ENCODE measurements at regions of chr19 and their contacts with region 1.

Region 1: DNA sequence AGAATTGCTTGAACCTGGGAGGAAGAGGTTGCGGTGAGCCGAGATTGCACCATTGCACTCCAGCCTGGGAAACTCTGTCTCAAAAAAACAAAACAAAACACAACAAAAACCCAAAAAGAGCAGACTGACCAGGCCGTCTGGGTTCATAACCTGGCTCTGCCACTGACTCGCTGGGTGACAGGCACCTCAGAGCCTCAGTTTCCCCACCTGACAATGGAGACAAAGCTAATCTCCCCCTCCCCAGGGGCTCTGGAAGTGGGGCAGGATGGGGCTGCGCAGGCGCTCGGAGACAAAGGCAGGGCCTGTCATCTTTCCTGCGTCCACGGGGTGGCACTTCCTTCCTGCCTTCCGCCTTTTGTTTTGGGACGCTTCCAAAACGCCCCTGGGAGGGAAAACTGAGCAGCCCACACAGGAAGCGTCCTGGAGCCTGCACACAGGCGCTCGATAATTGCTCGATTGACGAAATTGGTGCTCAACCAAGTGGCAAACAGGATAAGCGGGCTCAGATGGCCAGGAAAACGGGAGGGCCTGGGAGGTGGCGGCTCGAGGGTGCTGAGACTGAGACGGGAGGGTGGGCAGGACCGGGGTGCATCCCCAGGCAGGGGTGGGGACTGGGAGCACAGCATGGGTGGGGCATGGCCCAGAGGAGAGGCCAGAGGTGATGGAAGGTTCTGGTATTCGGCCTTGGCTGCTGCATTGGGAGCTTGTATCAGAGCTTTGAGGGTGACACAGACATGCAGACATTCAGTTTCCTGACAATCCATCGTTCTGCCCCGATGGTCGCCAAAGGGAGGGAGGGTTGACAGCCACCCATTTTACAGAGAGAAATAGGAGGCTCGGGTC is 17.8 kb downstream of the SPC24 start:
- DNase-seq: no peak
- ATAC-seq: peak; percentile 61
- H3K4me3 ChIP-seq: peak overlapping the region; percentile 29; the same call in 1 of the 2 replicates
- H3K27ac ChIP-seq: no peak overlapping the region
- H3K4me1 ChIP-seq: peaks cover 9% of the 10 kb centered on the region
- H3K27me3 ChIP-seq: no peaks in the 10 kb centered on the region
- CTCF ChIP-seq: peak; percentile 63 to 72 (median 70)
- EP300 ChIP-seq: no peak
- POLR2A ChIP-seq: no peak
- RAD21 ChIP-seq: peak; percentile 80

Region 2: DNA sequence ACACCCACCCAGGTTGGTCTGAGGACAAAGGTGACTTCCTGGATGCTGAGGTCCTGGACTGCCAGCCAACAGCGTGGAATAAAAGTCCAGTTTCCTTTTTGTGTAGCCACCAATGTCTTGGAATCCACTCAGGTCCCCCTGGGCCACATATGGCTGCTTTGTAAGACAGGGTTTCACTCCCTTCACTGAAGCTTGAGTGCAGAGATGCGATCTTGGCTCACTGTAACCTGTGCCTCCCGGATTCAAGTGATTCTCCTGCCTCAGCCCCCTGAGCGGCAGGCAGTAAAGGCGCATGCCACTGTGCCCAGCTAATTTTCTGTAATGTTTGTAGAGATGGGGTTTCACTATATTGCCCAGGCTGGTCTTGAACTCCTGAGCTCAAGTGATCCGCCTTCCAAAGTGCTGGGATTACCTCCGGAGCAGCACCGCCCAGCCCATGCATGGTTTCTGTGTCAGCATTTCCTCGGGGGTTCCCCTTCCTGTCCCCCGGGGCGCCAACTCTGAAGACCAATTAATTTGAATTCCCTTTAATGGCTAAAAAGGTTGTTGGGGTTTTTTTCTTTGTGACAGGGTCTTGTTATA is 42.0 kb after region 1 on chr19:
- CTCF ChIA-PET with region 1: no interaction called
- POLR2A ChIA-PET with region 1: no interaction called
- RAD21 ChIA-PET with region 1: no interaction called
- SMC1A ChIA-PET with region 1: no interaction called
- in situ Hi-C with region 1: no loop called
- intact Hi-C with region 1: no loop called
- DNase-seq: peak; percentile 59
- ATAC-seq: peak; percentile 94
- H3K4me3 ChIP-seq: peak overlapping the region; percentile 62
- H3K27ac ChIP-seq: peak overlapping the region; percentile 86
- H3K4me1 ChIP-seq: peaks cover 20% of the 10 kb centered on the region
- H3K27me3 ChIP-seq: no peaks in the 10 kb centered on the region
- CTCF ChIP-seq: no peak
- EP300 ChIP-seq: no peak
- POLR2A ChIP-seq: peak; percentile 52
- RAD21 ChIP-seq: no peak

Region 3: DNA sequence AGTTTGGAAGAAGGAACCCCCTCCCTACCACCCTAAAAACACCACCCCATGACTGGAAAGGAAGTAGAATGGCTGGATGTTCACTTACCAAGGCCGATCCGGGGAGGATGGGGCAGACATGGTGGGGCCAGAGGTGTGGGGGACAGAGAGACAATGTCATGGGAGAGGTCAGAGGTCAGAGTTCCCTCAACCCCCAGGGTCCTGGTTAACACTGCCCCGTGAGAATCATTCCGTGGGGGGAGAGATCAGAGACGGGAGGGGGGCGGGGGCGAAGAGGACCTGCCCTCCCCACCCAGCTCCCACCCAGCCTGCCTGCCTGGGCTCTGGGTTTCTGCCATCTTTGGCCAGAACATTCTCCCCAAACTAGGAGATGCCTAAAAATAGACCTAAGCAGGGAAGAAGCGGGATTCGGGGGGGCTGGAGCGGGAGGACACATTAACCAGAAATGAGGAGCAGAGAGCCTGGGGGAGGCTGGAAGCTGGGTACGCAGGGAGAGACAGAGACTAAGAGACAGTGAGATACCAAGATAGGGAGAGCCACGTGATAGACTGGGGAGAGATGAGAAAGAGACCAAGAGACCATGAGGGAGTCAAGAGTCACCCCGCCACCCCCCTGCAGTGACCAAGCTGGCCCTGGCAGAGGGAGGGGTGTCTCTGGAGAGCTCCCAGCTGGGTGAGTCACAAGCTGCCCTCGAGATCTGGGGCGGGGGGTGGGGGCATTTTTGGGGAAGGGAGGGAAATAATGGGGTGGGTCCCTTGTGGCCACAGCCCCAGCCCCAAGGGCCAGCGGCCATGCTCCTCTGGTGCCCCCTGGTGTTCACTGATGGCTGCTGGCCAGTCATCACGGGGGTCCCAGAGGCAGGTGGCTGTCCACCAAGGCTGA is 65.7 kb after region 1 on chr19:
- CTCF ChIA-PET with region 1: interaction called, 15 read pairs
- POLR2A ChIA-PET with region 1: no interaction called
- RAD21 ChIA-PET with region 1: interaction called, 5 read pairs
- SMC1A ChIA-PET with region 1: interaction called, 5 read pairs
- in situ Hi-C with region 1: no loop called
- intact Hi-C with region 1: loop called (anchors 1 kb)
- DNase-seq: no peak
- ATAC-seq: peak; percentile 71
- H3K4me3 ChIP-seq: no peak overlapping the region
- H3K27ac ChIP-seq: no peak overlapping the region
- H3K4me1 ChIP-seq: peaks cover 11% of the 10 kb centered on the region
- H3K27me3 ChIP-seq: no peaks in the 10 kb centered on the region
- CTCF ChIP-seq: peak; percentile 60 to 93 (median 81)
- EP300 ChIP-seq: no peak
- POLR2A ChIP-seq: no peak
- RAD21 ChIP-seq: peak; percentile 78

Region 4: DNA sequence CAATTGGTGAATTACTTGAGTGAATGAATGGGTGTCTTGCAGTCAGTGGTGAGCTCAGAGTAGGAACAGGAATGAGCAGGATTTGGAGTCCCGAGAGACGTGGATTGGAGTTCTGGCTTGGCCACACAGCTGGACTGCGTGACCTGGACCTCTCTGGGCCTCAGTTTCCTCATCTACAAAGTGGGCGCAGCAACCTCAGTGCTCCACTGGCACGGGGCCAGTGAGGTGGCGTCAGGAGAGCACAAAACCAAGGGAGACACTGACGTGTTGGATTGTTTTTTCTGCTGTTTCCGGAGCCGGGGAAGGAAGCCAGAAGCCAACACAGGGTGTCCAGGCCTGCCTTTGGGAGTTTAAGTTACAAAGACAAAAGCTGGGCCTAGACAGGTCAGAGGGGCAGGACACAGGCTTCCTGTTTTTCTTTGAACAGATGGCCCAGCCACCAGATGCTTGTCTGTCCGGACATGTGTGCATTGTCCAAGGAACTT is 131.1 kb after region 1 on chr19:
- CTCF ChIA-PET with region 1: no interaction called
- POLR2A ChIA-PET with region 1: no interaction called
- RAD21 ChIA-PET with region 1: no interaction called
- SMC1A ChIA-PET with region 1: no interaction called
- in situ Hi-C with region 1: no loop called
- intact Hi-C with region 1: no loop called
- DNase-seq: no peak
- ATAC-seq: no peak
- H3K4me3 ChIP-seq: no peak overlapping the region
- H3K27ac ChIP-seq: no peak overlapping the region
- H3K4me1 ChIP-seq: peaks cover 5% of the 10 kb centered on the region; the same call in 1 of the 2 replicates
- H3K27me3 ChIP-seq: no peaks in the 10 kb centered on the region
- CTCF ChIP-seq: no peak
- EP300 ChIP-seq: no peak
- POLR2A ChIP-seq: no peak
- RAD21 ChIP-seq: no peak